ENCODE measurements at regions of chr6 and their contacts with region 1.

Region 1: DNA sequence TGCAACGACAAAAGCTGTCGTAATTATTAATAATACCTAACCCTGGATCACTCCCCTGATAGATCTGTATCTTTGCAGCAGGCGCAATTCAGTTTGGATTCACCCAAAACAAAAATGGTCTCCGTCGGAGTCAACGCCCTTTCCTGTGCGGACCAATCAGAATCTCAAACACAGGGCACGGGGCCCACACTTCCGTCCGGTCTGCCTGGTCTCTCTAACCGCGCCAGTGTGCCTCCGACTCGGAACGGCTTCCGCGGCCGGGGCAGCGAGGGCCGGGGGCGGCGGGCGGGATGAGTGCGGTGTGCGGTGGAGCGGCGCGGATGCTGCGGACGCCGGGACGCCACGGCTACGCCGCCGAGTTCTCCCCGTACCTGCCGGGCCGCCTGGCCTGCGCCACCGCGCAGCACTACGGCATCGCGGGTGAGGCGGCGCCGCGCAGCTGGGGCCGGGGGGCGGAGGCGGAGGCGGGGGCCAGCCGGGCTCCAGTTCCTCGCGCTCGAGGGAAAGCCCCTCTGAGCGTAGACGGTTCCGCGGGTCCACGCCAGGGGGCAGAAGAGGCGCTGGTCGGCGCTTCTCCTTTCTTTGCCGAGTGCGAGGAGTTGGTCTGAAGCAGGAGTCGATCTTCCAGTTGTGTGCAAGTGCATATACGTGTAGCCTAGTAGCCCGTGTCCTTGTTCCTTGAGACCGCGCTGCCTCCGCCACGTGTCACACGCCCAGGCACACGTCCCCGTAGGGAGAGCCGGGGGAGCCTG is at the start of gene PEX7:
- DNase-seq: peak; percentile 94
- ATAC-seq: peak; percentile 95
- H3K4me3 Mint-ChIP-seq: peak within 1 kb of the TSS; percentile 82
- H3K27ac Mint-ChIP-seq: peak within 1 kb of the TSS; percentile 94
- H3K4me1 Mint-ChIP-seq: peaks cover 24% of the 10 kb centered on the region
- H3K27me3 Mint-ChIP-seq: no peaks in the 10 kb centered on the region
- total RNA-seq, gene PEX7: 3.6 to 4.9 TPM

Region 2: GRCh38 chr6:136289579-136290409 is 532.8 kb before region 1 on chr6 and contains the start of gene BCLAF1:
- CTCF ChIA-PET with region 1: no interaction called
- POLR2A ChIA-PET with region 1: no interaction called
- intact Hi-C with region 1: loop called in 1 of 2 experiments (anchors 1 kb)
- DNase-seq: peak; percentile 100
- ATAC-seq: peak; percentile 83
- H3K4me3 Mint-ChIP-seq: peak within 1 kb of the TSS; percentile 100
- H3K27ac Mint-ChIP-seq: peak within 1 kb of the TSS; percentile 100
- H3K4me1 Mint-ChIP-seq: peaks cover 37% of the 10 kb centered on the region
- H3K27me3 Mint-ChIP-seq: no peaks in the 10 kb centered on the region
- total RNA-seq, gene BCLAF1: 166 to 223 TPM

Region 3: GRCh38 chr6:136921936-136922684 is 99.6 kb after region 1 on chr6 and contains the start of gene SLC35D3:
- CTCF ChIA-PET with region 1: no interaction called
- POLR2A ChIA-PET with region 1: no interaction called
- intact Hi-C with region 1: loop called in 1 of 2 experiments (anchors 1 kb)
- DNase-seq: peak; percentile 41
- ATAC-seq: peak; percentile 35
- H3K4me3 Mint-ChIP-seq: peak within 1 kb of the TSS; percentile 69
- H3K27ac Mint-ChIP-seq: no peak within 1 kb of the TSS
- H3K4me1 Mint-ChIP-seq: peaks cover 18% of the 10 kb centered on the region
- H3K27me3 Mint-ChIP-seq: peaks cover 51% of the 10 kb centered on the region
- total RNA-seq, gene SLC35D3: not detected

Region 4: GRCh38 chr6:137218917-137219663 is 396.5 kb after region 1 on chr6 and contains the start of gene IFNGR1:
- CTCF ChIA-PET with region 1: no interaction called
- POLR2A ChIA-PET with region 1: no interaction called
- intact Hi-C with region 1: loop called in 1 of 2 experiments (anchors 1 kb)
- DNase-seq: peak; percentile 98
- ATAC-seq: peak; percentile 90
- H3K4me3 Mint-ChIP-seq: peak within 1 kb of the TSS; percentile 90
- H3K27ac Mint-ChIP-seq: peak within 1 kb of the TSS; percentile 97
- H3K4me1 Mint-ChIP-seq: peaks cover 49% of the 10 kb centered on the region
- H3K27me3 Mint-ChIP-seq: no peaks in the 10 kb centered on the region
- total RNA-seq, gene IFNGR1: 19.3 to 20.8 TPM

Region 5: GRCh38 chr6:138773177-138774091 is 1950.9 kb after region 1 on chr6 and contains the start of gene CCDC28A:
- CTCF ChIA-PET with region 1: no interaction called
- POLR2A ChIA-PET with region 1: no interaction called
- intact Hi-C with region 1: loop called in 1 of 2 experiments (anchors 2 kb)
- DNase-seq: peak; percentile 95
- ATAC-seq: peak; percentile 91
- H3K4me3 Mint-ChIP-seq: peak within 1 kb of the TSS; percentile 84
- H3K27ac Mint-ChIP-seq: peak within 1 kb of the TSS; percentile 98
- H3K4me1 Mint-ChIP-seq: peaks cover 31% of the 10 kb centered on the region
- H3K27me3 Mint-ChIP-seq: no peaks in the 10 kb centered on the region
- total RNA-seq, gene CCDC28A: 14.8 to 16.8 TPM

Measured in activated CD4-positive, alpha-beta T cell treated with anti-CD3 and anti-CD28 coated beads for 36 hours (primary cell).